MCF 10A (cell line): ENCODE measurements at regions of chr2 and their contacts with region 1.

Region 1: GRCh38 chr2:224086226-224086914 is 47.3 kb upstream of the SERPINE2 start:
- DNase-seq: peak; percentile 94
- H3K4me3 Mint-ChIP-seq: peak overlapping the region; percentile 24
- H3K27ac Mint-ChIP-seq: no peak overlapping the region
- H3K4me1 Mint-ChIP-seq: peaks cover 21% of the 10 kb centered on the region
- H3K27me3 Mint-ChIP-seq: no peaks in the 10 kb centered on the region
- CTCF ChIP-seq: no peak

Region 2: GRCh38 chr2:224101820-224102630 is 15.7 kb after region 1 on chr2:
- CTCF ChIA-PET with region 1: interaction called, 3 read pairs
- POLR2A ChIA-PET with region 1: interaction called, 26 read pairs
- intact Hi-C with region 1: no loop called
- DNase-seq: peak; percentile 66
- H3K4me3 Mint-ChIP-seq: no peak overlapping the region
- H3K27ac Mint-ChIP-seq: peak overlapping the region; percentile 53
- H3K4me1 Mint-ChIP-seq: peaks cover 22% of the 10 kb centered on the region
- H3K27me3 Mint-ChIP-seq: no peaks in the 10 kb centered on the region
- CTCF ChIP-seq: no peak

Region 3: GRCh38 chr2:224268441-224268840 is 182.1 kb after region 1 on chr2:
- CTCF ChIA-PET with region 1: no interaction called
- POLR2A ChIA-PET with region 1: no interaction called
- intact Hi-C with region 1: loop called (anchors 1 kb)
- DNase-seq: peak; percentile 76
- H3K4me3 Mint-ChIP-seq: no peak overlapping the region
- H3K27ac Mint-ChIP-seq: peak overlapping the region; percentile 76
- H3K4me1 Mint-ChIP-seq: peaks cover 8% of the 10 kb centered on the region
- H3K27me3 Mint-ChIP-seq: no peaks in the 10 kb centered on the region
- CTCF ChIP-seq: no peak